ENCODE measurements at regions of chr14 and their contacts with region 1.

Region 1: DNA sequence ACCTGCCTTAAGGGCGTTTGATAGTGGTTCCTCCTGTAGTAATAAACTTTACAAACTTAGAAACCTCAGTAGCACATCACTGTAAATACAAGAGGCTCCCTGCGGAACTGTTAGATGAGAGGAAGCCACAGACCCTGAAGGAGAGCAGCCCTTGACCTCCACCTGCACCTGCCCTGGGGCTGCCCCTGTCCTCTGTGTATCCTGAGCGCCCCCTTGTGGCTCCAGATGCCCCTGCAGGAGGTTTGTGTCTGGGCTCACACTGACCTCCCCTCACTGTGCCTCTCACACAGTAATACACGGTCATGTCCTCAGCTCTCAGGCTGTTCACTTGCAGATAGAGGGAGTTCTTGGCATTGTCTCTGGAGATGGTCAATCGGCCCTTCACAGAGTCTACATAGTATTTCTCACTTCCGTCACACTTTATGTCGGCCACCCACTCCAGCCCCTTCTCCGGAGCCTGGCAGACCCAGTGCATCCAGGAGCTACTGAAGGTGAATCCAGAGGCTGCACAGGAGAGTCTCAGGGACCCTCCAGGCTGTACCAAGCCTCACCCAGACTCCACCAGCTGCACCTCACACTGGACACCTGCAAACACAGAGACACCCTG is 1059.8 kb downstream of the TMEM121 start:
- DNase-seq: peak; percentile 73
- ATAC-seq: peak; percentile 83
- H3K4me3 Mint-ChIP-seq: no peak overlapping the region
- H3K27ac Mint-ChIP-seq: no peak overlapping the region
- H3K4me1 Mint-ChIP-seq: peaks cover 2% of the 10 kb centered on the region
- H3K27me3 Mint-ChIP-seq: peaks cover 46% of the 10 kb centered on the region

Region 2: DNA sequence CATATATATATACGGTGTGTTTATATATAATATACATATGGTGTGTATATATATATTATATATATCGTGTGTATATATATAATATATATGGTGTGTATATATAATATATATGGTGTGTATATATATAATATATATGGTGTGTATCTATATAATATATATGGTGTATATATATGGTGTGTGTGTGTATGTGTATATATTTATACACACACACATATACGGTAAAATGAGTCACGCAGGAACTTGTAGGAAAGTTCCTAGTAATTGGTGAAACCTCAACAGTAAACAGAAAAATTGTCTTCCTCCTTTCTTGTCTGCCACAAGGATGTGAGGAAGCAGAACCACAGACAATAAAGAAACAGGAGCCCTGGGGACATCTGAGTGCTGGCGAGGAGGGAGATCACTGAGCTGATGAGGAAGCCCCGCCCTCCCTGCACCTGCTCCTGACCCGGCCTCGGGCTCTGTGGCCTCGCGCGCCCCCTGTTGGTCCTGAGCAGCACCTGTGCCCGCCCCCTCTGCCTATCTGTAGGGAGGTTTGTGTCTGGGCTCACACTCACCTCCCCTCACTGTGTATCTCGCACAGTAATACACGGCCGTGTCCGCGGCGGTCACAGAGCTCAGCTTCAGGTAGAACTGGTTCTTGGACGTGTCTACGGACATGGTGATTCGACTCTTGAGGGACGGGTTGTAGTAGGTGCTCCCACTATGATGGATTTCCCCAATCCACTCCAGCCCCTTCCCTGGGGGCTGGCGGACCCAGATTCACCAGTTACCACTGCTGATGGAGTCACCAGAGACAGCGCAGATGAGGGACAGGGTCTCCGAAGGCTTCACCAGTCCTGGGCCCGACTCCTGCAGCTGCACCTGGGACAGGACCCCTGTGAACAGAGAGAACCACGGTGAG is 19.6 kb after region 1 on chr14:
- CTCF ChIA-PET with region 1: interaction called, 12 read pairs
- DNase-seq: peak; percentile 87
- ATAC-seq: peak; percentile 98
- H3K4me3 Mint-ChIP-seq: no peak overlapping the region
- H3K27ac Mint-ChIP-seq: no peak overlapping the region
- H3K4me1 Mint-ChIP-seq: peaks cover 5% of the 10 kb centered on the region
- H3K27me3 Mint-ChIP-seq: peaks cover 83% of the 10 kb centered on the region

Measured in activated CD8-positive, alpha-beta memory T cell treated with anti-CD3 and anti-CD28 coated beads, Interleukin-2, amount 10 ng/mL, durations not matched to agents 7 days and 5 days (primary cell).